Activated B cell treated with CpG ODN at 0.5 μM for 24 hours (primary cell): ENCODE measurements at regions of chr1 and their contacts with region 1.

Region 1: GRCh38 chr1:25810341-25811299 is 9.1 kb upstream of the MTFR1L start:
- DNase-seq: peak; percentile 81
- ATAC-seq: peak; percentile 92
- H3K4me3 Mint-ChIP-seq: no peak overlapping the region
- H3K27ac Mint-ChIP-seq: no peak overlapping the region
- H3K4me1 Mint-ChIP-seq: peaks cover 18% of the 10 kb centered on the region
- H3K27me3 Mint-ChIP-seq: no peaks in the 10 kb centered on the region
- CTCF ChIP-seq: peak; percentile 96

Region 2: GRCh38 chr1:25520446-25521061 is 290.1 kb before region 1 on chr1:
- CTCF ChIA-PET with region 1: interaction called, 19 read pairs
- POLR2A ChIA-PET with region 1: no interaction called
- intact Hi-C with region 1: loop called (anchors 5 kb)
- DNase-seq: peak; percentile 39
- ATAC-seq: peak; percentile 51
- H3K4me3 Mint-ChIP-seq: no peak overlapping the region
- H3K27ac Mint-ChIP-seq: no peak overlapping the region
- H3K4me1 Mint-ChIP-seq: peaks cover 9% of the 10 kb centered on the region
- H3K27me3 Mint-ChIP-seq: peaks cover 7% of the 10 kb centered on the region
- CTCF ChIP-seq: no peak

Region 3: DNA sequence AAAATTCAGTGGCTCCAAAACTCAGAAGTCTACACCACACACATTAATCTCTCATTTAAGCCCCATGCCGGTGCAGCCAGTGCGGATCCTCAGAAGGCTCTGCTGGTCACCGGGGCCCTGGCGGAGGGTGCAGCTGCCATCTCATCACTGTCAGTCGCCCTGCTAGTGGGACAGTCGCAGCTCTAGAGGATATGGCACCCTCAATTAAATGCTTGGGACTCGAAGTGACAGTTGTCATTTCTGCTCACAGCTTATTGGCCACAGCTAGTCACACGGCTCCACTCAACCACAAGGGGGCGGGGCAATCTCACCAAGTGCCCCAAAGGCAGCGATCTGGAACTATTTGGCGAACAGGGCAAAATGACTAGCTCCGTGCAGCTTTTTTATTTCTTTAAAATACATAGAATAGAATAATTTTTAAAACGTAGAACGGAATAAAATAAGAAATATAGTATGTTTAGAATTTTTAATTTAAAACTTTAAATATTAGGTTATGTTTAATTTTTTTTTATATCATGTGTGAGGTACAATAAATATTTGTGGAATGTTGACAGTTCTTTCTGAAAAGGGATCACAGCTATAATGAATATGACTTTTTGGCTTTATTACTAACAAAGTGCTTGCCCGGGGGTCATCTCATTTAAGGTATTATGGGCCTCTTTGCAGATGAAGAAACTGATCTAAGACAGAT is 202.0 kb before region 1 on chr1:
- CTCF ChIA-PET with region 1: interaction called, 5 read pairs
- POLR2A ChIA-PET with region 1: no interaction called
- intact Hi-C with region 1: loop called (anchors 2 kb)
- DNase-seq: peak; percentile 67
- ATAC-seq: peak; percentile 99
- H3K4me3 Mint-ChIP-seq: no peak overlapping the region
- H3K27ac Mint-ChIP-seq: no peak overlapping the region
- H3K4me1 Mint-ChIP-seq: peaks cover 7% of the 10 kb centered on the region
- H3K27me3 Mint-ChIP-seq: peaks cover 20% of the 10 kb centered on the region
- CTCF ChIP-seq: no peak